ENCODE measurements at regions of chr6 and their contacts with region 1.

Region 1: GRCh38 chr6:111259089-111259831 is 172.0 kb downstream of the SLC16A10 start:
- DNase-seq: peak; percentile 99
- ATAC-seq: peak; percentile 97
- H3K4me3 ChIP-seq: peak overlapping the region; percentile 72
- H3K27ac ChIP-seq: peak overlapping the region; percentile 90
- H3K4me1 ChIP-seq: no peaks in the 10 kb centered on the region
- H3K27me3 ChIP-seq: no peaks in the 10 kb centered on the region
- CTCF ChIP-seq: peak; percentile 95 to 99 (median 97); a peak in 5 of 6 replicates
- EP300 ChIP-seq: peak in 1 of 2 experiments; percentile 88; a peak in 2 of 4 replicates
- POLR2A ChIP-seq: peak; percentile 95
- RAD21 ChIP-seq: peak; percentile 93

Region 2: GRCh38 chr6:111195656-111196055 is 63.6 kb before region 1 on chr6:
- CTCF ChIA-PET with region 1: no interaction called
- POLR2A ChIA-PET with region 1: no interaction called
- RAD21 ChIA-PET with region 1: no interaction called
- SMC1A ChIA-PET with region 1: no interaction called
- in situ Hi-C with region 1: no loop called
- intact Hi-C with region 1: no loop called
- DNase-seq: no peak
- ATAC-seq: no peak
- H3K4me3 ChIP-seq: no peak overlapping the region
- H3K27ac ChIP-seq: no peak overlapping the region
- H3K4me1 ChIP-seq: no peaks in the 10 kb centered on the region
- H3K27me3 ChIP-seq: no peaks in the 10 kb centered on the region
- CTCF ChIP-seq: no peak
- EP300 ChIP-seq: no peak
- POLR2A ChIP-seq: no peak
- RAD21 ChIP-seq: no peak

Region 3: DNA sequence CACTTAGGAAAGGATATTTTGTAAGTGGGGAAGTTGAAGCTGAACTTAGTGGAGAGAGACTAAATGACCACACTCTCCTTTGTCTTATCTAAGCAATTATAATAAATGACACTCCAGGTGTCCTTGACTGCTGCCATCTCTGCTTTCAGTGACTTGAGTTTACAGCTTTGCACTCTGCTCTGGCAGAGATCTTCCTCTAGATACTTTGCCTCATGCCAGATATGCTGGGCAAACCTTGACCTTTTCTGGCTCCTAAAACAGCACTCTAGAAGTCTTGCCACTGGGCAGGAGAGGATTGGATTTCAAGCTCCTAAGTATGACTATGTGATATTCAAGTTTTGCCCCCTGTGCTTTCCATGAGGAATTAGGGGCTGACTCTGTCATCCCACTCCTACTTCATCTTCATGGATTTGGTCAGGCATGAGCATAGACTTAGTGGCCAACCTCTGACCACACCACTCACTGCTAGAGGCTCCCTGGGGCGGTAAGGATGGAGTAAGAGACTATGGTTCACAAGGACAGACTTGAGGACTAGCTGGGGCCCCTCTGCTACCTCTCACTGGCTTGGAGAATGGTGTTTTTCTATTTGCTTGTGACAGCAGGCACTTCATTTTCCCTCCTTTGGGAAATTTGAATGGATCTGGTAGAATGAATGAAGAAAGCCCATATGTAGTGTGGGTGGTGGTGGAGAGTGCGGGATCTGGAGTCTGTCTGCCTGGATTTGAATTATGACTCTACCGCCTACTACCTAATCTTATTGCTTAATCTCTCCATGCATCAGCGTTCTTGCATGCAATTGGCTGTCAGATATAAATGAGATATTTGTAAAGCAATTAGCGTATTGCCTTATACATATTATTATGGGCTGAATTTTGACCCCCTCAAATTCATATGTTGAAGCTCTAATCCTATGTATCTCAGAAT is 32.3 kb after region 1 on chr6:
- CTCF ChIA-PET with region 1: interaction called, 4 read pairs
- POLR2A ChIA-PET with region 1: interaction called, 5 read pairs
- RAD21 ChIA-PET with region 1: interaction called, 12 read pairs
- SMC1A ChIA-PET with region 1: no interaction called
- in situ Hi-C with region 1: no loop called
- intact Hi-C with region 1: no loop called
- DNase-seq: no peak
- ATAC-seq: peak; percentile 29
- H3K4me3 ChIP-seq: no peak overlapping the region
- H3K27ac ChIP-seq: peak overlapping the region; percentile 27; the same call in 1 of the 2 replicates
- H3K4me1 ChIP-seq: peaks cover 14% of the 10 kb centered on the region
- H3K27me3 ChIP-seq: no peaks in the 10 kb centered on the region
- CTCF ChIP-seq: no peak
- EP300 ChIP-seq: no peak
- POLR2A ChIP-seq: no peak
- RAD21 ChIP-seq: no peak

Region 4: DNA sequence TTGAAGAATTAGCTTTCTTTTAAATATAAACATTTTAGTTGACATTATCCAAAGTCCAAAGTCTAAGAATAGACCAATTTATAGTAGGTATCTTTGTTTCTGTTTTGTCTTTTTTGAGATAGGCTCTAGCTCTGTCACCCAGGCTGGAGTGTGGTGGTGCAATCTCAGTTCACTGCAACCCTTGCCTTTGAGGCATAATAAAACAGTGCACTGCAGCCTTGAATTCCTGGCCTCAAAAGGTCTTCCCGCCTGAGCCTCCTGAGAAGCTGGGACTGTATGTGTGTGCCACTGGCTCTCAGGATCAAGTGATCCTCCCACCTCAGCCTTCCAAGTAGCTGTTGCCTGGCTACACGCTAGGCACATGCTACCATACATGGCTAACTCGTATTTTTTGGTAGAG is 88.3 kb after region 1 on chr6:
- CTCF ChIA-PET with region 1: interaction called, 11 read pairs
- POLR2A ChIA-PET with region 1: no interaction called
- RAD21 ChIA-PET with region 1: interaction called, 7 read pairs
- SMC1A ChIA-PET with region 1: interaction called, 6 read pairs
- in situ Hi-C with region 1: no loop called
- intact Hi-C with region 1: no loop called
- DNase-seq: no peak
- ATAC-seq: no peak
- H3K4me3 ChIP-seq: no peak overlapping the region
- H3K27ac ChIP-seq: no peak overlapping the region
- H3K4me1 ChIP-seq: no peaks in the 10 kb centered on the region
- H3K27me3 ChIP-seq: no peaks in the 10 kb centered on the region
- CTCF ChIP-seq: no peak
- EP300 ChIP-seq: no peak
- POLR2A ChIP-seq: no peak
- RAD21 ChIP-seq: no peak

Region 5: DNA sequence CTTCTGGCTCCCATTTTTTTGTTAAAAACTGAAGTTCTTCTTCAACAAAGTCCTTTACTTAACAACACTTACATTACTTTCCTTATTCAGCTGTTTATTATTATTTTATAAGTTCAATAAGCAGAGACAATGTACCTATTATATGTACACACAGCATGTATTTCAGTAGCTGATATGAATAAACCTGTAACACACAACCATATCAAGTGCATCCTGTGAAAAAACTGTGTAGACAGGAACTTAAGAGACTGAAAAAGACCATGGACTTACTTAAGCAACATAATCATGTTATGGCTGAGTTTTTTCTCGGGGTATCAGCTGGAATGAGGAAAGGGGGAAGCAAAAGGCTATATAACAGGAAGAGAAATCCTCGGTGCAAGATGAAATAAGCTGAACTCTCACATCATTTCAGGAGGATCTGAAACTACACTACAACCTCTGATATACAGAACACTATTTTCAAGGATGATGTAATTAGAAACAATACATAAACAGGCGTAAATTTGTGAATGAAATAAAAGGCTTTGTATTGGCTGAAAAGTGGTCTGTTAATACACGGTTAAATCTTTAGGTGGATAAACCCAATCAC is 152.8 kb after region 1 on chr6:
- CTCF ChIA-PET with region 1: interaction called, 13 read pairs
- POLR2A ChIA-PET with region 1: interaction called, 4 read pairs
- RAD21 ChIA-PET with region 1: interaction called, 30 read pairs
- SMC1A ChIA-PET with region 1: interaction called, 9 read pairs
- in situ Hi-C with region 1: no loop called
- intact Hi-C with region 1: no loop called
- DNase-seq: peak; percentile 48
- ATAC-seq: peak; percentile 74
- H3K4me3 ChIP-seq: no peak overlapping the region
- H3K27ac ChIP-seq: peak overlapping the region; percentile 64
- H3K4me1 ChIP-seq: peaks cover 31% of the 10 kb centered on the region
- H3K27me3 ChIP-seq: no peaks in the 10 kb centered on the region
- CTCF ChIP-seq: no peak
- EP300 ChIP-seq: peak in 1 of 2 experiments; percentile 81; a peak in 2 of 4 replicates
- POLR2A ChIP-seq: no peak
- RAD21 ChIP-seq: no peak

Region 6: GRCh38 chr6:111565326-111566221 is 306.3 kb after region 1 on chr6:
- CTCF ChIA-PET with region 1: interaction called, 56 read pairs
- POLR2A ChIA-PET with region 1: interaction called, 3 read pairs
- RAD21 ChIA-PET with region 1: interaction called, 34 read pairs
- SMC1A ChIA-PET with region 1: interaction called, 23 read pairs
- in situ Hi-C with region 1: no loop called
- intact Hi-C with region 1: loop called (anchors 2 kb)
- DNase-seq: no peak
- ATAC-seq: peak; percentile 96
- H3K4me3 ChIP-seq: no peak overlapping the region
- H3K27ac ChIP-seq: peak overlapping the region; percentile 53
- H3K4me1 ChIP-seq: peaks cover 15% of the 10 kb centered on the region
- H3K27me3 ChIP-seq: no peaks in the 10 kb centered on the region
- CTCF ChIP-seq: peak; percentile 41 to 47 (median 46); a peak in 5 of 6 replicates
- EP300 ChIP-seq: no peak
- POLR2A ChIP-seq: peak; percentile 50
- RAD21 ChIP-seq: peak; percentile 59

Region 7: DNA sequence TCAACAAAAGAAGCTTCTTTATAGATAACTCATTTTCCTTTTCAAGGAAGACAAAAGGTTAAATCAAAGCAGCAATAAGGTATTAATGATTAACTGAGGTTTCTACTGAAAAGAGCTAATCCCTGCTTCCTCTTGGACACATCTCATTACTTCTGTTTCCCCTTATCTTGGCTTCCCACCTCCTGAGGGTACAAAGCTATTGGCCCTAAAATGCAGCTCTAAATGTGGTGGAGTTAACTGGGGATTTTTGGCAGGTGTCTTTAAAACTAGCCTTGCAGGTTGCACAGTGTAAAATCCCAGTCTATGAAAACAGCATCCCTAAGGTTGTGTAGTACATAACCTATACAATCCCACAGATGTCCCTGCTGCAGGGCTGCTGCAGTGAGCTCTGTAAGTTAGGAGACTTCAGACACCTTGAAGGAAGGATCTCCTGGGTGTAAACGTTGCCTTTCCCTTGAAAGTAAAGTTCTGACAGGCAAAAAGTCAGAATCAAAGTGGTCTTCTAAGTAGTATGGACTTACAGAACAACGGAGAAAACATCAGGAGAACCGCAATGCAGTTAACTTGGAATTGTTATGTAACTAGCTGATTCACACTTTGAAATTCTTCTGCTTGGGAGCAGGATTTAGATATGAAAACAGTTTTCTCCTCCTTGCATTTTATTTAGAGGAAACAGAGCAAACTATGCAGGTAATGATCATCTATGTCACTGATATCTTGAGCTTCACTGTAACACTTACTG is 418.2 kb after region 1 on chr6:
- CTCF ChIA-PET with region 1: interaction called, 4 read pairs
- POLR2A ChIA-PET with region 1: no interaction called
- RAD21 ChIA-PET with region 1: interaction called, 7 read pairs
- SMC1A ChIA-PET with region 1: interaction called, 11 read pairs
- in situ Hi-C with region 1: no loop called
- intact Hi-C with region 1: no loop called
- DNase-seq: no peak
- ATAC-seq: no peak
- H3K4me3 ChIP-seq: no peak overlapping the region
- H3K27ac ChIP-seq: no peak overlapping the region
- H3K4me1 ChIP-seq: no peaks in the 10 kb centered on the region
- H3K27me3 ChIP-seq: no peaks in the 10 kb centered on the region
- CTCF ChIP-seq: no peak
- EP300 ChIP-seq: no peak
- POLR2A ChIP-seq: no peak
- RAD21 ChIP-seq: no peak

Measured in GM12878 (cell line).